CD4-positive, alpha-beta T cell (primary cell): ENCODE measurements at regions of chr14 and their contacts with region 1.

Region 1: GRCh38 chr14:23095196-23096108 is at the start of gene C14orf119:
- DNase-seq: peak in 12 of 14 experiments; percentile 99 to 100 (median 100)
- ATAC-seq: peak; percentile 85
- H3K4me3 ChIP-seq: peak within 1 kb of the TSS; percentile 81
- H3K4me3 Mint-ChIP-seq: no peak within 1 kb of the TSS
- H3K27ac ChIP-seq: peak within 1 kb of the TSS; percentile 96 to 97
- H3K27ac Mint-ChIP-seq: no peak within 1 kb of the TSS
- H3K4me1 ChIP-seq: peaks cover 29% of the 10 kb centered on the region
- H3K4me1 Mint-ChIP-seq: peaks cover 46% of the 10 kb centered on the region
- H3K27me3 ChIP-seq: no peaks in the 10 kb centered on the region
- H3K27me3 Mint-ChIP-seq: no peaks in the 10 kb centered on the region
- CTCF ChIP-seq: no peak
- total RNA-seq, gene C14orf119: 3.1 to 3.9 TPM

Region 2: DNA sequence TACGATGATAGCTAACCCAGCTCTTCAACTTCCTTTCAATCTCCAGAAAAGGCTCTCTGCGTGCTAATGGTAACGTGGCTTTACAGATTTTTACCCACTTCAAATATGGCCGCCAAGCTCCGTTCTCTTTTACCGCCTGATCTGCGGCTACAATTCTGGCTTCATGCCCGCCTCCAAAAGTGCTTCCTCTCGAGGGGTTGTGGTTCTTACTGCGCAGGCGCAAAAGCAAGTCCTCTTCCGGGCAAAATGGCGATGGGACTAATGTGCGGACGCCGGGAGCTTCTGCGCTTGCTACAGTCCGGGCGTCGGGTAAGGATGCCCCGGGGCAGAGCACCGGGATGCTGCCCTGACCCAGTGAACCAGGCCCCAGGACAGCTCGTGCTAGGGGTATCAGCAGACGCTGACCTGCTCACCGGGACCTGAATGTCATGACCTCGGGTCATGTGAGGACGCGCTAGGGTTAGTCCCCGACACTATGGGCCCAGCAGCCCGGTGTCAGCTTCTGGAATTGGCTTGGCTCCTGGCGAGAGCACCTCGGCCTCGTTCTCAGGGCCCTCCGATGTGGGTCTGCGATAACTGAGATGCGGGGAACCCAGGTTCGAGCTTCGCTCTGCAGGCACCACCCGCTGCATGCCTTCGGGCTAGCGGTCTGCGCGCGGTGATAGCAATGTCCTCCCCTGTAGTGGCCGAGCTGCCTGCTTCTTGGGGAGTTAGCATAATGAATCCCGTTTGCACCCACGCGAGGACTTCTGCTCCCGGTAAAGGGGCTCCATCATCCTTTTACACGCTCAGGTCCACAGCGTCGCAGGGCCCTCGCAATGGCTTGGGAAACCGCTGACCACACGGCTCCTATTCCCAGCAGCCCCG is 328.8 kb before region 1 on chr14 and contains the start of gene OXA1L:
- CTCF ChIA-PET with region 1: no interaction called
- POLR2A ChIA-PET with region 1: interaction called, 19 read pairs
- intact Hi-C with region 1: loop called in 1 of 2 experiments (anchors 10 kb)
- DNase-seq: peak; percentile 86 to 99 (median 96)
- ATAC-seq: peak; percentile 94
- H3K4me3 ChIP-seq: peak within 1 kb of the TSS; percentile 87
- H3K4me3 Mint-ChIP-seq: peak within 1 kb of the TSS; percentile 85
- H3K27ac ChIP-seq: peak within 1 kb of the TSS; percentile 80
- H3K27ac Mint-ChIP-seq: peak within 1 kb of the TSS; percentile 88
- H3K4me1 ChIP-seq: peaks cover 23% of the 10 kb centered on the region
- H3K4me1 Mint-ChIP-seq: peaks cover 33% of the 10 kb centered on the region
- H3K27me3 ChIP-seq: no peaks in the 10 kb centered on the region
- H3K27me3 Mint-ChIP-seq: no peaks in the 10 kb centered on the region
- CTCF ChIP-seq: no peak
- total RNA-seq, gene OXA1L: 176 to 177 TPM

Region 3: GRCh38 chr14:22955702-22956569 is 139.5 kb before region 1 on chr14:
- CTCF ChIA-PET with region 1: no interaction called
- POLR2A ChIA-PET with region 1: interaction called, 14 read pairs
- intact Hi-C with region 1: no loop called
- DNase-seq: no peak
- ATAC-seq: no peak
- H3K4me3 ChIP-seq: peak overlapping the region; percentile 89
- H3K4me3 Mint-ChIP-seq: peak overlapping the region; percentile 92
- H3K27ac ChIP-seq: peak overlapping the region; percentile 63 to 83
- H3K27ac Mint-ChIP-seq: peak overlapping the region; percentile 83
- H3K4me1 ChIP-seq: peaks cover 21% of the 10 kb centered on the region
- H3K4me1 Mint-ChIP-seq: peaks cover 18% of the 10 kb centered on the region
- H3K27me3 ChIP-seq: no peaks in the 10 kb centered on the region
- H3K27me3 Mint-ChIP-seq: no peaks in the 10 kb centered on the region
- CTCF ChIP-seq: no peak

Region 4: GRCh38 chr14:23057757-23058653 is 37.4 kb before region 1 on chr14:
- CTCF ChIA-PET with region 1: interaction called, 5 read pairs
- POLR2A ChIA-PET with region 1: interaction called, 15 read pairs
- intact Hi-C with region 1: no loop called
- DNase-seq: peak; percentile 74 to 94 (median 86)
- ATAC-seq: peak; percentile 73
- H3K4me3 ChIP-seq: peak overlapping the region; percentile 75
- H3K4me3 Mint-ChIP-seq: peak overlapping the region; percentile 90
- H3K27ac ChIP-seq: no peak overlapping the region
- H3K27ac Mint-ChIP-seq: peak overlapping the region; percentile 63
- H3K4me1 ChIP-seq: peaks cover 24% of the 10 kb centered on the region
- H3K4me1 Mint-ChIP-seq: peaks cover 18% of the 10 kb centered on the region
- H3K27me3 ChIP-seq: no peaks in the 10 kb centered on the region
- H3K27me3 Mint-ChIP-seq: no peaks in the 10 kb centered on the region
- CTCF ChIP-seq: peak; percentile 91

Region 5: GRCh38 chr14:23120541-23121251 is 25.2 kb after region 1 on chr14:
- CTCF ChIA-PET with region 1: interaction called, 32 read pairs
- POLR2A ChIA-PET with region 1: interaction called, 135 read pairs
- intact Hi-C with region 1: loop called (anchors 1 to 2 kb)
- DNase-seq: peak; percentile 63 to 91 (median 72)
- ATAC-seq: peak; percentile 61
- H3K4me3 ChIP-seq: no peak overlapping the region
- H3K4me3 Mint-ChIP-seq: peak overlapping the region; percentile 80
- H3K27ac ChIP-seq: peak overlapping the region; percentile 51 to 55
- H3K27ac Mint-ChIP-seq: peak overlapping the region; percentile 94
- H3K4me1 ChIP-seq: peaks cover 54% of the 10 kb centered on the region
- H3K4me1 Mint-ChIP-seq: peaks cover 61% of the 10 kb centered on the region
- H3K27me3 ChIP-seq: no peaks in the 10 kb centered on the region
- H3K27me3 Mint-ChIP-seq: no peaks in the 10 kb centered on the region
- CTCF ChIP-seq: peak; percentile 99

Region 6: GRCh38 chr14:23301288-23301968 is 206.0 kb after region 1 on chr14:
- CTCF ChIA-PET with region 1: interaction called, 3 read pairs
- POLR2A ChIA-PET with region 1: interaction called, 48 read pairs
- intact Hi-C with region 1: no loop called
- DNase-seq: peak; percentile 91 to 100 (median 96)
- ATAC-seq: peak; percentile 69
- H3K4me3 ChIP-seq: peak overlapping the region; percentile 75
- H3K4me3 Mint-ChIP-seq: peak overlapping the region; percentile 96
- H3K27ac ChIP-seq: peak overlapping the region; percentile 97
- H3K27ac Mint-ChIP-seq: peak overlapping the region; percentile 97
- H3K4me1 ChIP-seq: peaks cover 30% of the 10 kb centered on the region
- H3K4me1 Mint-ChIP-seq: peaks cover 39% of the 10 kb centered on the region
- H3K27me3 ChIP-seq: peaks cover 7 to 8% of the 10 kb centered on the region in 2 experiments
- H3K27me3 Mint-ChIP-seq: peaks cover 15% of the 10 kb centered on the region
- CTCF ChIP-seq: peak; percentile 65